GM12878 (cell line): ENCODE measurements at regions of chr16 and their contacts with region 1.

Region 1: GRCh38 chr16:28950648-28951409 is at the start of gene NFATC2IP:
- DNase-seq: peak; percentile 99
- ATAC-seq: peak; percentile 97
- H3K4me3 ChIP-seq: peak within 1 kb of the TSS; percentile 99
- H3K27ac ChIP-seq: peak within 1 kb of the TSS; percentile 86
- H3K4me1 ChIP-seq: peaks cover 5% of the 10 kb centered on the region
- H3K27me3 ChIP-seq: no peaks in the 10 kb centered on the region
- CTCF ChIP-seq: no peak
- EP300 ChIP-seq: no peak
- POLR2A ChIP-seq: peak; percentile 92
- RAD21 ChIP-seq: no peak
- polyA plus RNA-seq, gene NFATC2IP: 12.2 to 16.2 TPM

Region 2: DNA sequence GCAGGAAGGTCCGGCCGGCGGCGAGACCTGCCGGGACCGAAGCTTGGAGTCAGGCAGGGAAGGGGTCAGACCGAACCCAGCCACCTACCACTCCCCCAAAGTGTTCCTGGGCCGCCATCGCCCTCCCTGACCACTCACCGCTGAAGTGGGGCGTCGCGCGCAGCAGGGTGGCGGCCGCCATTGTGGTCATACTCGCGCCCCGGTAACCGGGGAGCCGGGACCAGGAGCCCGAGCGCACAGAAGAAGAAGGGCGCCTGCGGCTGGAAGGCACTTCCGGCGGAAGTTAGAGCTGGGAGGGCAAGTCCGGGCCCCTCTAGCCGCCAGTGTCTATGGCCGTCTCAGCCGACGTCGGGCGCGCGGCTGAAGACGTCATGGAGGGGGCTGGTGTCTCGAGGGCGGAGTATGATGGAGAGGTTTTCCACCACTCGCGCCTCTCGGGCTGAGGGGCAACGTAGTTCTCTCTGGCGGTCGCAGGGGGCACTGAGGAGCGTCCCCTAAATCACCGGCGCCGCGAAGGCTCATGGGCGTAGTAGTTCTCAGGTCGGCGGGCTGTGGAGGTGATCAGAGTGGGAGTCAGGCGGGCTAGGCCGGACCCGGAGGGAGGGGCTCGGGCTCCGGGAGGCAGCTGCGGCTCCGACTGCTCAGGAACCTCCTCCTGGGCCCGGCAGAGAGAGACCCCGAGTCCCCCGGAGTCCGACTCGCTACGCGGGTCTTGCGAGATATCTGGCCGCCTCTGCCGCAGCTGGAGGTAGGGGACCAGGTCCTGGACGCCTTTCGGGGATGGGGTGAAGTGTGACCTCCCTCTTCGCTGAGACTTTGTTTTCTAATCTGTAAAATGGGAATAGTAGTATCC is 104.5 kb before region 1 on chr16 and contains the start of gene TUFM:
- CTCF ChIA-PET with region 1: interaction called, 17 read pairs
- POLR2A ChIA-PET with region 1: no interaction called
- RAD21 ChIA-PET with region 1: interaction called, 22 read pairs
- SMC1A ChIA-PET with region 1: interaction called, 27 read pairs
- in situ Hi-C with region 1: no loop called
- intact Hi-C with region 1: no loop called
- DNase-seq: peak; percentile 92
- ATAC-seq: peak; percentile 95
- H3K4me3 ChIP-seq: peak within 1 kb of the TSS; percentile 96
- H3K27ac ChIP-seq: peak within 1 kb of the TSS; percentile 81
- H3K4me1 ChIP-seq: peaks cover 9% of the 10 kb centered on the region
- H3K27me3 ChIP-seq: no peaks in the 10 kb centered on the region
- CTCF ChIP-seq: peak; percentile 75 to 97 (median 79); a peak in 5 of 6 replicates
- EP300 ChIP-seq: 0 out of 4 replicates have a peak, but pooled peaks of 1 of the 2 experiments have one; percentile 26
- POLR2A ChIP-seq: peak; percentile 93
- RAD21 ChIP-seq: 0 out of 2 replicates have a peak, but pooled peaks have one; percentile 30
- polyA plus RNA-seq, gene TUFM: 23.4 to 101 TPM

Region 3: GRCh38 chr16:28863929-28864793 is 86.7 kb before region 1 on chr16:
- CTCF ChIA-PET with region 1: interaction called, 124 read pairs
- POLR2A ChIA-PET with region 1: interaction called, 3 read pairs
- RAD21 ChIA-PET with region 1: interaction called, 25 read pairs
- SMC1A ChIA-PET with region 1: interaction called, 32 read pairs
- in situ Hi-C with region 1: no loop called
- intact Hi-C with region 1: no loop called
- DNase-seq: no peak
- ATAC-seq: peak; percentile 19
- H3K4me3 ChIP-seq: peak overlapping the region; percentile 78
- H3K27ac ChIP-seq: peak overlapping the region; percentile 99
- H3K4me1 ChIP-seq: peaks cover 10% of the 10 kb centered on the region
- H3K27me3 ChIP-seq: no peaks in the 10 kb centered on the region
- CTCF ChIP-seq: no peak
- EP300 ChIP-seq: no peak
- POLR2A ChIP-seq: no peak
- RAD21 ChIP-seq: no peak

Region 4: DNA sequence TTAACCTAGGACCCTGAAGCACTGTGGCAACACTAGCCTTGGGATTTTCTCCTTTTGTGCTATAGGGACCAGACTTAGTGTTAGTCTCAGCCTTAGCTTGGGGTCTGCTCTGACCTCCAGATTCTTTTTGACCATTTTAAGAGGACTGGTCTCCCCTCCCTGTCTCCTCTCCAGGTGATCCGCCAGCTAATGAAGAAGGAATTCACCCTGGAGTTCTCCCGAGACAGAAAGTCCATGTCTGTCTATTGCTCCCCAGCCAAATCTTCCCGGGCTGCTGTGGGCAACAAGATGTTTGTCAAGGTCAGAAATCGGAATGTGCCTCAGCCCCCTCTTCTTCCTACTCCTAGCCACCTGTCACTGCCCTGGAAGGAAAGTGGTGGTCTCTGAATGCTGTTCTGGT is 53.0 kb before region 1 on chr16:
- CTCF ChIA-PET with region 1: interaction called, 3 read pairs
- POLR2A ChIA-PET with region 1: no interaction called
- RAD21 ChIA-PET with region 1: interaction called, 5 read pairs
- SMC1A ChIA-PET with region 1: interaction called, 10 read pairs
- in situ Hi-C with region 1: no loop called
- intact Hi-C with region 1: no loop called
- DNase-seq: no peak
- ATAC-seq: no peak
- H3K4me3 ChIP-seq: no peak overlapping the region
- H3K27ac ChIP-seq: no peak overlapping the region
- H3K4me1 ChIP-seq: no peaks in the 10 kb centered on the region; the same call in 1 of the 2 replicates
- H3K27me3 ChIP-seq: no peaks in the 10 kb centered on the region
- CTCF ChIP-seq: no peak
- EP300 ChIP-seq: no peak
- POLR2A ChIP-seq: no peak
- RAD21 ChIP-seq: no peak

Region 5: GRCh38 chr16:28917095-28917494 is 33.7 kb before region 1 on chr16:
- CTCF ChIA-PET with region 1: interaction called, 76 read pairs
- POLR2A ChIA-PET with region 1: interaction called, 21 read pairs
- RAD21 ChIA-PET with region 1: no interaction called
- SMC1A ChIA-PET with region 1: interaction called, 58 read pairs
- in situ Hi-C with region 1: no loop called
- intact Hi-C with region 1: no loop called
- DNase-seq: no peak
- ATAC-seq: no peak
- H3K4me3 ChIP-seq: no peak overlapping the region
- H3K27ac ChIP-seq: no peak overlapping the region
- H3K4me1 ChIP-seq: no peaks in the 10 kb centered on the region
- H3K27me3 ChIP-seq: no peaks in the 10 kb centered on the region
- CTCF ChIP-seq: no peak
- EP300 ChIP-seq: no peak
- POLR2A ChIP-seq: no peak
- RAD21 ChIP-seq: no peak

Region 6: DNA sequence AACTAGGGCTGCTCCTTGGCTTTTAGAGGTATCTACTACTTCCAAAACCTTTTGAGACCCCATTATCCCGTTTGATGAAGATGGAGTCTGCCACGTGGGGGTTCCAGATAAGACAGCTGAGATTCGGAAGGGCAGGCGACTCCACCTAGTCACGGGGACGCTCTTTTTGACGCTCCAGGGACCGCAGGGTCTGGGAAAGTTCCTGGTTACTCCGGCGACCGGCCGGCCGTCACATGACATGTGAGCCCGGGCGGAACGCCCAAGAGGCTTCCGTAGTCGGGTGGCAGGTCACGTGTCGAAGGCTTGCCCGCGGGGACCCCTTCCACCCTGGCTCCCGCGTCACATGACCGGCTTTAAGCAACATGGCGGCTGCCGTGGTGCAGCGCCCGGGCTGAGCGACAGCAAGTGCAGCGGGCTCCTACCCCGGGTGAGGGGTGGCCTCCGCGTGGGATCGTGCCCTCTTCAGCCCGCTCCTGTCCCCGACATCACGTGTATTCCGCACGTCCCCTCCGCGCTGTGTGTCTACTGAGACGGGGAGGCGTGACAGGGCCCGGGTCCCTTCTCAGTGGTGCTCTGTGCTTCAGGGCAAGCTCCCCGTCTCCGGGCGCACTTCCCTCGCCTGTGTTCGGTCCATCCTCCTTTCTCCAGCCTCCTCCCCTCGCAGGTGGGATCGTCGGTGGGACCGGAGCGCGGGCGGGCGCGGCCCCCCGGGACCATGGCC is 23.8 kb after region 1 on chr16 and contains the start of gene SPNS1:
- CTCF ChIA-PET with region 1: interaction called, 26 read pairs
- POLR2A ChIA-PET with region 1: interaction called, 5 read pairs
- RAD21 ChIA-PET with region 1: interaction called, 4 read pairs
- SMC1A ChIA-PET with region 1: interaction called, 6 read pairs
- in situ Hi-C with region 1: no loop called
- intact Hi-C with region 1: no loop called
- DNase-seq: peak; percentile 74
- ATAC-seq: peak; percentile 97
- H3K4me3 ChIP-seq: peak within 1 kb of the TSS; percentile 92
- H3K27ac ChIP-seq: peak within 1 kb of the TSS; percentile 58
- H3K4me1 ChIP-seq: peaks cover 4% of the 10 kb centered on the region
- H3K27me3 ChIP-seq: no peaks in the 10 kb centered on the region
- CTCF ChIP-seq: no peak
- EP300 ChIP-seq: peak; percentile 52 to 61; a peak in 1 of 4 replicates
- POLR2A ChIP-seq: peak; percentile 92
- RAD21 ChIP-seq: no peak
- polyA plus RNA-seq, gene SPNS1: 0.16 to 2.3 TPM

Region 7: DNA sequence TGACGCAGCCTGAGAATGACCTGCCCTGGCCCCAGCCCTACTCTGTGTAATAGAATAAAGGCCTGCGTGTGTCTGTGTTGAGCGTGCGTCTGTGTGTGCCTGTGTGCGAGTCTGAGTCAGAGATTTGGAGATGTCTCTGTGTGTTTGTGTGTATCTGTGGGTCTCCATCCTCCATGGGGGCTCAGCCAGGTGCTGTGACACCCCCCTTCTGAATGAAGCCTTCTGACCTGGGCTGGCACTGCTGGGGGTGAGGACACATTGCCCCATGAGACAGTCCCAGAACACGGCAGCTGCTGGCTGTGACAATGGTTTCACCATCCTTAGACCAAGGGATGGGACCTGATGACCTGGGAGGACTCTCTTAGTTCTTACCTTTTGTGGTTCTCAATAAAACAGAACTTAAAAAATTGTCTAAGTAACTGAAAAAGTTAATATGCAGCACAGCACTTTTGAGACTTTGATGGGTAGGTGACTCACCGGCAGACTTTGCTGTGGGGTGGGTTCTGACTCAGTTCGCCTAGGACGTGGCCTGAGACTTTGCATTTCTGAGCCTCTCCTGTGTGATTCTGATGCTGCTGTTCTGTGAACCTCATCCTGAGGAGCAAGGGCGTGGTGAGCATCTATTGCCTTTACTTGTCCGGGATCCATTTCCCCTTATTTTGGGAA is 39.7 kb after region 1 on chr16:
- CTCF ChIA-PET with region 1: no interaction called
- POLR2A ChIA-PET with region 1: no interaction called
- RAD21 ChIA-PET with region 1: no interaction called
- SMC1A ChIA-PET with region 1: no interaction called
- in situ Hi-C with region 1: no loop called
- intact Hi-C with region 1: no loop called
- DNase-seq: no peak
- ATAC-seq: 0 out of 3 replicates have a peak, but pooled peaks have one; percentile 21
- H3K4me3 ChIP-seq: no peak overlapping the region
- H3K27ac ChIP-seq: no peak overlapping the region
- H3K4me1 ChIP-seq: no peaks in the 10 kb centered on the region; the same call in 1 of the 2 replicates
- H3K27me3 ChIP-seq: no peaks in the 10 kb centered on the region
- CTCF ChIP-seq: no peak
- EP300 ChIP-seq: no peak
- POLR2A ChIP-seq: no peak
- RAD21 ChIP-seq: no peak

Region 8: GRCh38 chr16:29107299-29107698 is 156.5 kb after region 1 on chr16:
- CTCF ChIA-PET with region 1: no interaction called
- POLR2A ChIA-PET with region 1: no interaction called
- RAD21 ChIA-PET with region 1: no interaction called
- SMC1A ChIA-PET with region 1: no interaction called
- in situ Hi-C with region 1: no loop called
- intact Hi-C with region 1: no loop called
- DNase-seq: no peak
- ATAC-seq: no peak
- H3K4me3 ChIP-seq: no peak overlapping the region
- H3K27ac ChIP-seq: no peak overlapping the region
- H3K4me1 ChIP-seq: no peaks in the 10 kb centered on the region
- H3K27me3 ChIP-seq: no peaks in the 10 kb centered on the region
- CTCF ChIP-seq: no peak
- EP300 ChIP-seq: no peak
- POLR2A ChIP-seq: no peak
- RAD21 ChIP-seq: no peak